ENCODE measurements at regions of chr3 and their contacts with region 1.

Region 1: DNA sequence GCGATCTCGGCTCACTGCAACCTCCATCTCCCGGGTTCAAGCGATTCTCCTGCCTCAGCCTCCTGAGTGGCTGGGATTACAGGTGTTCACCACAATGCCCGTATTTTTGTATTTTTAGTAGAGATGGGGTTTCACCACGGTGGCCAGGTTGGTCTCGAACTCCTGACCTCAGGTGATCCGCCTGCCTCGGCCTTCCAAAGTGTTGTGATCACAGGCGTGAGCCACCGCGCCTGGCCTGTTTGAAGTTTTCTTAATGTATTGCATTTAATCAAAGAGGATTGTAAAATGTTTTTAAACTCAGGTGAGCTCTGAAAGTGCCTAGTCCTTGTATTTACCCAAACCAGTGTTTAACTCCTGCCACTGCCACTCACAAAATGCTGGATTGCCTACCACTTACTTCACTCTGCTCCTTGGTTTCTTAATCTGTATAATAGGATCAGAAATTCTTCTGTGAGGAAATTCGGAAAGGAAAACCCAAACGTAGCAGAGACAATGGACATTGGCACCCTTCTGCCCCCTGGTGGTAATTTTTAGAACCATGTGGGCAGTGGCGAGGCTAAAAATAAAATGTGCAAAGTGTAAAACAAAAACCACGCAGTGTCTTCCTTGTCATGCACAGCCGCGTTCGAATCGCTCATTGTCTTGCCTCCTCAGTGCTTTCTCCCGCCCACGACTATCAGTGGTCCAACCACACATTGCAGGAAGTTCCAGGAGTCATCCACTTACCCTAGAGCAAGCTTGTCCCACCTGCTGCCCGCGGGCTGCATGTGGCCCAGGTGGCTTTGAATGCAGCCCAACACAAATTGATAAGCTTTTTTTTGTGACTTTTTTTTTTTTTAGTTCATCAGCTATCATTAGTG is 27.3 kb downstream of the CEP19 start:
- DNase-seq: peak; percentile 83
- ATAC-seq: peak; percentile 98
- H3K4me3 ChIP-seq: no peak overlapping the region
- H3K27ac ChIP-seq: no peak overlapping the region
- H3K4me1 ChIP-seq: no peaks in the 10 kb centered on the region; the same call in 1 of the 2 replicates
- H3K27me3 ChIP-seq: no peaks in the 10 kb centered on the region
- CTCF ChIP-seq: peak; percentile 69 to 86 (median 83)
- EP300 ChIP-seq: 0 out of 4 replicates have a peak, but pooled peaks have one; percentile 23 to 53
- POLR2A ChIP-seq: no peak
- RAD21 ChIP-seq: peak; percentile 87

Region 2: DNA sequence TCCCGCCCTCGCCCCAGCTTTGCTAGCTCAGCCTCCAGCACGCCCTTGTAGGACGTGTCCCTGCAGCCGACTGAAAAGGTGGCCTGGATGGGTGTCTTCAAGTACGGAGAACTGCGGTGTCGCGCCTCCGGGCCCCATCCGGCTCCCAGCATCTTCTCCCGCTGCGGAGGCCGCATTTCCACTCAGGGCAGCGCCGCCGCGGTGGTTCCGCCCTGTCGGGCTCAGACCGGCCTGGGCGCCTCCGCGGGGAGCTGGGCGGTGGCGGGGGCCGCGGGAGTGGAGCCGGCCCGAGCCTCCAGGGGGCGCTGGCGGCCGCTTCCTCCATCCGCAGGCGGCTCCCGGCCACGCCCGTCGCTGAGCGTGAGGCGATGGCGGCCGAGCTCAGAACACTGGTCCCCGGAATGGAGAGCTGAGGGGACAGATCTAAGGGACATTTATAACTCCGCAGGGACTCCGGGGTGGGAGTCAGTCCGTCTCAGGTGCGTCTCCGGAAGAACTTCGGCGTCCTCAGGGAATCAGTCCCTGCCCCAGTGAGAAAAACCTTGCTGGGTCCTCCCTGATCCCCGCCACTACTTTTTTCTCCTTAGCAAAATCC is 156.0 kb before region 1 on chr3:
- CTCF ChIA-PET with region 1: interaction called, 5 read pairs
- POLR2A ChIA-PET with region 1: no interaction called
- RAD21 ChIA-PET with region 1: no interaction called
- SMC1A ChIA-PET with region 1: no interaction called
- in situ Hi-C with region 1: no loop called
- intact Hi-C with region 1: loop called (anchors 2 kb)
- DNase-seq: no peak
- ATAC-seq: peak; percentile 96
- H3K4me3 ChIP-seq: peak overlapping the region; percentile 69
- H3K27ac ChIP-seq: peak overlapping the region; percentile 96
- H3K4me1 ChIP-seq: peaks cover 13% of the 10 kb centered on the region
- H3K27me3 ChIP-seq: no peaks in the 10 kb centered on the region
- CTCF ChIP-seq: peak; percentile 49 to 84 (median 53); a peak in 5 of 6 replicates
- EP300 ChIP-seq: no peak
- POLR2A ChIP-seq: peak; percentile 94
- RAD21 ChIP-seq: peak; percentile 48

Region 3: GRCh38 chr3:196537319-196537984 is 147.3 kb before region 1 on chr3:
- CTCF ChIA-PET with region 1: interaction called, 3 read pairs
- POLR2A ChIA-PET with region 1: no interaction called
- RAD21 ChIA-PET with region 1: interaction called, 3 read pairs
- SMC1A ChIA-PET with region 1: no interaction called
- in situ Hi-C with region 1: no loop called
- intact Hi-C with region 1: loop called (anchors 2 kb)
- DNase-seq: no peak
- ATAC-seq: peak; percentile 31; the same call in 1 of the 3 replicates
- H3K4me3 ChIP-seq: no peak overlapping the region
- H3K27ac ChIP-seq: no peak overlapping the region
- H3K4me1 ChIP-seq: no peaks in the 10 kb centered on the region
- H3K27me3 ChIP-seq: no peaks in the 10 kb centered on the region
- CTCF ChIP-seq: peak; percentile 60 to 65 (median 63)
- EP300 ChIP-seq: no peak
- POLR2A ChIP-seq: no peak
- RAD21 ChIP-seq: peak; percentile 69

Region 4: GRCh38 chr3:196632046-196632751 is 52.6 kb before region 1 on chr3:
- CTCF ChIA-PET with region 1: interaction called, 9 read pairs
- POLR2A ChIA-PET with region 1: interaction called, 3 read pairs
- RAD21 ChIA-PET with region 1: interaction called, 14 read pairs
- SMC1A ChIA-PET with region 1: interaction called, 26 read pairs
- in situ Hi-C with region 1: no loop called
- intact Hi-C with region 1: no loop called
- DNase-seq: peak; percentile 69
- ATAC-seq: peak; percentile 84
- H3K4me3 ChIP-seq: peak overlapping the region; percentile 72
- H3K27ac ChIP-seq: peak overlapping the region; percentile 98
- H3K4me1 ChIP-seq: peaks cover 38% of the 10 kb centered on the region
- H3K27me3 ChIP-seq: no peaks in the 10 kb centered on the region
- CTCF ChIP-seq: peak; percentile 8 to 54 (median 49); a peak in 4 of 6 replicates
- EP300 ChIP-seq: no peak
- POLR2A ChIP-seq: peak; percentile 80
- RAD21 ChIP-seq: peak; percentile 54

Region 5: DNA sequence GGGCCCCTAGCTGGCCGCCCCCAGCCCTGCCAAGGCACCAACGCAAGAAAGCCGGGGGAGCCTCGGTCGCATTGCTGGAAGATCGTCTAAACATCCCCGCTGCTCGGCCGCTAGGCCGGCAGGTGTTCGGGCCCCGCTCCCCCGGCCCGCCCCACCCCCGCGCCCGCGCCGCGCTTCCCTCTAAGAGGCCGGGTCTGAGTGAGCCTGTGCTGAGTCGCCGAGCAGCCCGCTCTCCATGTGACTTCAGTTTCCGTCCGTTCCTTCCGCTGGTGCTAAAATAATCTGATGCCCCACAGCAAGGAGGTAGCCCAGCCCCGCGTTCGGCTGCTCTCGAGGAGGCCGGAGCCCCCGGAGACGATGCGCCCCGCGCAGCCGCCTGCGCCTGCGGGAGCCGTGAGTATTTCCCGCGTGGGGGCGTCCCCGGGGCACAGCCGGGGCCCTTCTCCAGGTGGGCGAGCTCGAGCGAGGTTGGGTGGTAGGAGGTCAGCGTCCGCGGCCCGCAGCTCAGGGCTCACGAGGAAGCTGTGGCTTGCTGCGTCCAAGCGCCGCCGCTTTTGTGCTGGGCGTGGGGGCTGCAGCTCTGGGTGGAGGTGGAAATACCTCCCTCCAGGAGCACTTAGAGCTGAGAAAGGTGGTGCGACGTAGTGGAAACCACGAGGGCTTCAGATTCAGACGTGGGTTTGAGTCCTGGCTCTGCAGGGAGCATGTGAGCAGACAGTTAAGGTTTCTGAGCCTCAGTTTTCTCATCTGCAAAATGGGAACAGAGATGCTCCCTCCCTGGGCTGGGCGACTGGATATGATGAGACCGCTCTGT is 45.1 kb before region 1 on chr3 and contains the start of gene NRROS:
- CTCF ChIA-PET with region 1: interaction called, 8 read pairs
- POLR2A ChIA-PET with region 1: interaction called, 4 read pairs
- RAD21 ChIA-PET with region 1: interaction called, 9 read pairs
- SMC1A ChIA-PET with region 1: interaction called, 26 read pairs
- in situ Hi-C with region 1: no loop called
- intact Hi-C with region 1: loop called (anchors 1 kb)
- DNase-seq: no peak
- ATAC-seq: peak; percentile 59
- H3K4me3 ChIP-seq: peak within 1 kb of the TSS; percentile 78
- H3K27ac ChIP-seq: peak within 1 kb of the TSS; percentile 99
- H3K4me1 ChIP-seq: peaks cover 44% of the 10 kb centered on the region
- H3K27me3 ChIP-seq: no peaks in the 10 kb centered on the region
- CTCF ChIP-seq: no peak
- EP300 ChIP-seq: 0 out of 4 replicates have a peak, but pooled peaks of 1 of the 2 experiments have one; percentile 20
- POLR2A ChIP-seq: peak; percentile 89
- RAD21 ChIP-seq: no peak
- polyA plus RNA-seq, gene NRROS: 0.35 TPM